ENCODE measurements at regions of chr12 and their contacts with region 1.

Region 1: GRCh38 chr12:109804820-109805761 is 28.1 kb downstream of the TRPV4 start:
- DNase-seq: peak; percentile 62 to 82
- ATAC-seq: peak; percentile 77 to 93
- H3K4me3 ChIP-seq: no peak overlapping the region
- H3K27ac ChIP-seq: no peak overlapping the region
- H3K4me1 ChIP-seq: no peaks in the 10 kb centered on the region
- CTCF ChIP-seq: peak; percentile 94
- EP300 ChIP-seq: no peak
- POLR2A ChIP-seq: no peak
- RAD21 ChIP-seq: peak; percentile 91 to 94

Region 2: GRCh38 chr12:109727039-109727723 is 77.9 kb before region 1 on chr12:
- CTCF ChIA-PET with region 1: no interaction called
- POLR2A ChIA-PET with region 1: no interaction called
- DNase-seq: no peak
- ATAC-seq: no peak
- H3K4me3 ChIP-seq: no peak overlapping the region
- H3K27ac ChIP-seq: no peak overlapping the region
- H3K4me1 ChIP-seq: no peaks in the 10 kb centered on the region
- CTCF ChIP-seq: no peak
- EP300 ChIP-seq: no peak
- POLR2A ChIP-seq: no peak
- RAD21 ChIP-seq: no peak

Region 3: GRCh38 chr12:109828236-109828550 is 23.1 kb after region 1 on chr12:
- CTCF ChIA-PET with region 1: interaction called, 46 read pairs
- POLR2A ChIA-PET with region 1: no interaction called
- DNase-seq: no peak
- ATAC-seq: no peak
- H3K4me3 ChIP-seq: no peak overlapping the region
- H3K27ac ChIP-seq: 0 out of 6 replicates have a peak overlapping the region, but pooled peaks of 1 of the 2 experiments have one; percentile 28
- H3K4me1 ChIP-seq: peaks cover 17% of the 10 kb centered on the region
- CTCF ChIP-seq: no peak
- EP300 ChIP-seq: no peak
- POLR2A ChIP-seq: no peak
- RAD21 ChIP-seq: no peak

Region 4: DNA sequence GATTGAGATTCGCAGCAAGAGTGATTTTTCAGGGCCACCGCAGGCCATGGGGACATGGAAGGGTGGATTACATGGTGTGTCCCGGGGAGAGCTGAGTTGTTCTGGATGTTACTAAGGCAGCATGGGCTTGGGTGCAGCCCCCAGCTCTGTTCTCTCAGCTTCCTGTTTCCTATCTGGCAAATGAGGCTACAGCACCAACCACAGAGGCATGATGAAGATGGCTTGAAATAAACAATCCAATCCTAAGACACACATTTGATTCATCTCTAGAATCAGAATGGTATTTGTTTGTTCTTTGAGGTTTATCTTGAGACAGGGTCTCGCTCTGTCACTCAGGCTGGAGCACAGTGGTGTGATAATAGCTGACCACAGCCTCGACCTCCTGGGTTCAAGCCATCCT is 53.7 kb after region 1 on chr12:
- CTCF ChIA-PET with region 1: interaction called, 277 read pairs
- POLR2A ChIA-PET with region 1: no interaction called
- DNase-seq: no peak
- ATAC-seq: no peak
- H3K4me3 ChIP-seq: no peak overlapping the region
- H3K27ac ChIP-seq: no peak overlapping the region
- H3K4me1 ChIP-seq: no peaks in the 10 kb centered on the region
- CTCF ChIP-seq: no peak
- EP300 ChIP-seq: no peak
- POLR2A ChIP-seq: no peak
- RAD21 ChIP-seq: no peak

Region 5: GRCh38 chr12:109880016-109880931 is 75.2 kb after region 1 on chr12 and contains the start of gene GLTP:
- CTCF ChIA-PET with region 1: interaction called, 27 read pairs
- POLR2A ChIA-PET with region 1: no interaction called
- DNase-seq: peak; percentile 78 to 88
- ATAC-seq: peak; percentile 94
- H3K4me3 ChIP-seq: peak within 1 kb of the TSS; percentile 81
- H3K27ac ChIP-seq: peak within 1 kb of the TSS; percentile 82 to 90
- H3K4me1 ChIP-seq: peaks cover 43% of the 10 kb centered on the region
- CTCF ChIP-seq: peak; percentile 89
- EP300 ChIP-seq: no peak
- POLR2A ChIP-seq: peak; percentile 30; the same call in 1 of the 2 replicates
- RAD21 ChIP-seq: peak; percentile 53 to 91; a peak in 4 of 5 replicates
- polyA plus RNA-seq, gene GLTP: 18.8 and 19.2 TPM in 2 replicates

Region 6: DNA sequence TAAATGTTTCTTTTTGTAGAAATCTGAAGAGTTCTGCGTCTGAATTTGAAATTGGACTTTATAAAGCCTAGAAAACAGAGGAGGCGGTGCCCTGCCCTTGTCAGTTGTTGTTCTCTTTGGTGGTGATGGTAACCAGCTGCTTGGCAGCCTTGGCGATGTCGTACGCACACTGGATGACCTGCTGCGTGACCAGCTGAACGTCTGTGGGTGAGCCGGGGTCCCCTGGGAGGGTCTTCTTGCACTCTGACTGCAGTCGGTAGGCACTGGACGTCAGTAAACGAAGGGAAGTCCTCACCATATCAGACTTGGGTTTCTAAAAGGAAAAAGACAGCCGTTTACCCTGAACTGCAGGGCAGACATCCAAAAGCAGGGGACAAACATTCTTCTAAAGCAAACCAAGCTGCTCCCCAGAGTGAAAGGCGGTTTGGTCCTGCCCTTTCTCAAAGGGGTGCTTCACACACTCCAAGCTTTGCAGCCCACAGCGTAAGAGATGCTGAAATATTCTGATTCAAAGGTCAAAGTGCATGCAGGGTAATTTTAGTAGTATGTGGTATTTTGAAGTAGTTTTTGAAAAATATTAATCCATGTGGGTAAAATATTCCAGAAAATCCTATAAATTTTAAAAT is 127.9 kb after region 1 on chr12:
- CTCF ChIA-PET with region 1: interaction called, 13 read pairs
- POLR2A ChIA-PET with region 1: no interaction called
- DNase-seq: no peak
- ATAC-seq: no peak
- H3K4me3 ChIP-seq: no peak overlapping the region
- H3K27ac ChIP-seq: no peak overlapping the region
- H3K4me1 ChIP-seq: no peaks in the 10 kb centered on the region
- CTCF ChIP-seq: no peak
- EP300 ChIP-seq: no peak
- POLR2A ChIP-seq: no peak
- RAD21 ChIP-seq: no peak